Breast epithelium (tissue), 4 donors: ENCODE measurements at regions of chr2 and their contacts with region 1.

Region 1: GRCh38 chr2:172172513-172173173 is 69.9 kb upstream of the DLX2 start:
- DNase-seq: peak; percentile 60 to 77
- H3K4me3 ChIP-seq: peak overlapping the region; percentile 39 to 70 (median 55)
- H3K27ac ChIP-seq: peak overlapping the region in 1 of 2 donors; percentile 58
- H3K4me1 ChIP-seq: no peaks in the 10 kb centered on the region
- H3K27me3 ChIP-seq: no peaks in the 10 kb centered on the region
- CTCF ChIP-seq: peak; percentile 41 to 77 (median 75)
- POLR2A ChIP-seq: no peak

Region 2: DNA sequence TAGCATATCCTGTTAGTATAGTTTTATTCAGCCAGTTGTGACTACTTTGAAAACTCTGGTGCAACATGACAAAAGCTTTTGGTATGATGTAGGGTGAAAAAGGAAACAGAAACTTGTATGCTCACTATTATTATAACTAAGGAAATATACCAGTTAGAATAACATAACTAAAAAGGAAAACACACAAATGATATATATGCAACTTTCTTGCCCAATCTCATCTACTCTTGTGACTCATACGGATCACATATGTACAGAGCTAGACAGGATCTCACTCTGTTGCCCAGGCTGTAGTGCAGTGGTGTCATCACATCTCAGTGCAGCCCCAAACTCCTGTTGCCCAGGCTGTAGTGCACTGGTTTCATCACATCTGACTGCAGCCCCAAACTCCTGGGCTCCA is 999.6 kb before region 1 on chr2:
- intact Hi-C with region 1: loop called (anchors 10 kb)
- DNase-seq: no peak
- H3K4me3 ChIP-seq: no peak overlapping the region
- H3K27ac ChIP-seq: no peak overlapping the region
- H3K4me1 ChIP-seq: no peaks in the 10 kb centered on the region
- H3K27me3 ChIP-seq: no peaks in the 10 kb centered on the region
- CTCF ChIP-seq: no peak
- POLR2A ChIP-seq: no peak

Region 3: GRCh38 chr2:172244419-172245130 is 71.9 kb after region 1 on chr2:
- intact Hi-C with region 1: loop called (anchors 2 kb)
- DNase-seq: peak in 1 of 2 donors; percentile 61
- H3K4me3 ChIP-seq: no peak overlapping the region
- H3K27ac ChIP-seq: peak overlapping the region in 1 of 2 donors; percentile 21
- H3K4me1 ChIP-seq: no peaks in the 10 kb centered on the region
- H3K27me3 ChIP-seq: no peaks in the 10 kb centered on the region
- CTCF ChIP-seq: no peak
- POLR2A ChIP-seq: no peak

Region 4: GRCh38 chr2:172461591-172462372 is 289.1 kb after region 1 on chr2:
- intact Hi-C with region 1: loop called (anchors 5 kb)
- DNase-seq: peak in 1 of 2 donors; percentile 46
- H3K4me3 ChIP-seq: peak overlapping the region in 1 of 3 donors; percentile 13
- H3K27ac ChIP-seq: peak overlapping the region; percentile 56 to 64
- H3K4me1 ChIP-seq: peaks cover 0 to 13% of the 10 kb centered on the region in 2 donors
- H3K27me3 ChIP-seq: peaks cover 0 to 3% of the 10 kb centered on the region in 2 donors
- CTCF ChIP-seq: peak; percentile 33 to 83 (median 60)
- POLR2A ChIP-seq: no peak

Region 5: DNA sequence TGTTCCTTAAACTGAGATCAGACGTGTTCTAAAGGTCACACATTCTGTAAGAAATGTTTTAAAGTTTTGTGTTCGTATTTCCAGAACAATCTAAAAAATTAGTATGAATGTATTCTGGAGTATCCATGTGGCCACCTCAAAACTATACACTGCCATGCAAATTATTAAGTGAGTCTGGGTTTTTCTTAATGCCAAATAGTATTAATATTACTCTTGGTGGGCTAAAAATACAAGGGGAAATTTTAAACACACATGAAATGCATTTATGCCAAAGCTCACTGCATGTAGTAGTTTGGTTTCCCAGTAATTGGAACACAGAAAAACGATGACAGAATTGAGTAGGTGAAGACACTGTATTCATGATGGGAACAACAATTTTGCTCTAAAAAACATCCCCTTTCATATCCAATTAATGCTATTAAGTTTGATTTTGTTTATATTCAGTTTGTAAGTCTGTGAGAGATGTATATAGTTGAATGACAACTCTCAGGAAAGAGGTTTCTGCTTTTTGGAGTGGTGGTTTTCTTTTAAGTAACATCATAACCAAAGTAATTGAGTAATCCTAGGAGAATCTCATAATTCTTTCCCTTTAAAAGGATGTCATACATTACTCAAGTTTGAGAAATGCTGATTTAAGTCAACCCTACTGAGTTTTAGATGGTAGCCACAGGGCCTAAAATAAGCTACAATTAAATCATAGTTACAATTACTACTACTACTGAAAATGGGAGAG is 1106.3 kb after region 1 on chr2:
- intact Hi-C with region 1: no loop called
- DNase-seq: no peak
- H3K4me3 ChIP-seq: no peak overlapping the region
- H3K27ac ChIP-seq: no peak overlapping the region
- H3K4me1 ChIP-seq: no peaks in the 10 kb centered on the region
- H3K27me3 ChIP-seq: no peaks in the 10 kb centered on the region
- CTCF ChIP-seq: no peak
- POLR2A ChIP-seq: no peak